ENCODE measurements at regions of chr17 and their contacts with region 1.

Region 1: GRCh38 chr17:58517734-58518609 is 3.5 kb upstream of the MTMR4 start:
- DNase-seq: peak; percentile 100
- ATAC-seq: peak; percentile 86
- H3K4me3 Mint-ChIP-seq: peak overlapping the region; percentile 89
- H3K27ac Mint-ChIP-seq: peak overlapping the region; percentile 97
- H3K4me1 Mint-ChIP-seq: peaks cover 51% of the 10 kb centered on the region
- H3K27me3 Mint-ChIP-seq: no peaks in the 10 kb centered on the region

Region 2: DNA sequence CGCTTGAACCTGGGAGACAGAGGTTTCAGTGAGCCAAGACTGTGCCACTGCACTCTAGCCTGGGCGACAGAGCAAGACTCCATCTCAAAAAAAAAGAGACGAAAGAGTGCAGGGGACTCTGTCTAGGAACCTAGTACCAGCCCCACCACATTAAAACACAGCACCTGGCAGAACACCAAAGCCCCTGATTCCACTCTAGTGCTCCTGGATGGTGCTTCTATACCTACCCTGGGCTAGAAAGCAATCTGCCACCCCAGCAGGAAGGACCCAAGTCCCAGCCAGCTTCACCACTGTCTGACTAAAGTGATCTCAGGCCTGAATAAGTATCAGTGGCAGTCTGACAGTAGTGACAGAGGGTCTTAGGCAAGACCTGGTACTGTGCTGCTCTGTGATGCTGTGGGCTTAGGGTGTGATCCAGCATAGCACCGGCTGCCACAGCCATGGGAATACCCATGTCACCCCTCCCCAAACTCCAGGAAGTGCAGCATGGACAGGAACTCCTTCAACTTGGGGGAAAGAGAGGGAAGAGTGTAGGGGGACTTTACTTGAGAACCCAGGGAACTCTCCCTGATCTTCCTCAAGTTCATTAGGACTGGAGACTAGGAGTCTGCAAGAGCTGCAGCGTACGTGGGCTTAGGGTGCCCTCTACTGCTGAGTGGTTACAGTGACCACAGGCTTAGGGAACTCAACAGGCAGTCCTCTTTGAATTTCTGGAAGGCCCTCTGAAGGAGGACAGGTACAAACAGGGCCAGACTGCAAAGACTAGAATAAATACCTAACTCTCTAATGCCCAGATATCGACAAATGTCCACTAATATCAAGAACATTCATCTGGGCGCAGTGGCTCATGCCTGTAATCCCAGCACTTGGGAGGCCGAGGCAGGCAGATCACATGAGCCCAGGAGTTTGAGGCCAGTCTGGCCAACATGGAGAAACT is 70.7 kb before region 1 on chr17:
- CTCF ChIA-PET with region 1: no interaction called
- POLR2A ChIA-PET with region 1: no interaction called
- DNase-seq: peak; percentile 84
- ATAC-seq: peak; percentile 95
- H3K4me3 Mint-ChIP-seq: no peak overlapping the region
- H3K27ac Mint-ChIP-seq: no peak overlapping the region
- H3K4me1 Mint-ChIP-seq: peaks cover 4% of the 10 kb centered on the region
- H3K27me3 Mint-ChIP-seq: no peaks in the 10 kb centered on the region

Region 3: GRCh38 chr17:58531661-58532554 is 13.9 kb after region 1 on chr17:
- CTCF ChIA-PET with region 1: interaction called, 14 read pairs
- POLR2A ChIA-PET with region 1: interaction called, 4 read pairs
- DNase-seq: peak; percentile 66
- ATAC-seq: peak; percentile 93
- H3K4me3 Mint-ChIP-seq: peak overlapping the region; percentile 35
- H3K27ac Mint-ChIP-seq: no peak overlapping the region
- H3K4me1 Mint-ChIP-seq: peaks cover 11% of the 10 kb centered on the region
- H3K27me3 Mint-ChIP-seq: peaks cover 54% of the 10 kb centered on the region

Region 4: GRCh38 chr17:58569239-58570177 is 51.5 kb after region 1 on chr17:
- CTCF ChIA-PET with region 1: no interaction called
- POLR2A ChIA-PET with region 1: no interaction called
- DNase-seq: no peak
- ATAC-seq: no peak
- H3K4me3 Mint-ChIP-seq: no peak overlapping the region
- H3K27ac Mint-ChIP-seq: no peak overlapping the region
- H3K4me1 Mint-ChIP-seq: no peaks in the 10 kb centered on the region
- H3K27me3 Mint-ChIP-seq: peaks cover 6% of the 10 kb centered on the region

Measured in activated CD8-positive, alpha-beta T cell treated with anti-CD3 and anti-CD28 coated beads, Interleukin-2, amount 10 ng/mL, durations not matched to agents 7 days and 5 days (primary cell).